Mammary epithelial cell (primary cell): ENCODE measurements at regions of chr12 and their contacts with region 1.

Region 1: GRCh38 chr12:4133636-4134447 is 139.7 kb upstream of the CCND2 start:
- DNase-seq: no peak
- H3K4me3 ChIP-seq: no peak overlapping the region
- H3K27ac ChIP-seq: no peak overlapping the region
- H3K4me1 ChIP-seq: no peaks in the 10 kb centered on the region
- H3K27me3 ChIP-seq: no peaks in the 10 kb centered on the region
- CTCF ChIP-seq: no peak

Region 2: DNA sequence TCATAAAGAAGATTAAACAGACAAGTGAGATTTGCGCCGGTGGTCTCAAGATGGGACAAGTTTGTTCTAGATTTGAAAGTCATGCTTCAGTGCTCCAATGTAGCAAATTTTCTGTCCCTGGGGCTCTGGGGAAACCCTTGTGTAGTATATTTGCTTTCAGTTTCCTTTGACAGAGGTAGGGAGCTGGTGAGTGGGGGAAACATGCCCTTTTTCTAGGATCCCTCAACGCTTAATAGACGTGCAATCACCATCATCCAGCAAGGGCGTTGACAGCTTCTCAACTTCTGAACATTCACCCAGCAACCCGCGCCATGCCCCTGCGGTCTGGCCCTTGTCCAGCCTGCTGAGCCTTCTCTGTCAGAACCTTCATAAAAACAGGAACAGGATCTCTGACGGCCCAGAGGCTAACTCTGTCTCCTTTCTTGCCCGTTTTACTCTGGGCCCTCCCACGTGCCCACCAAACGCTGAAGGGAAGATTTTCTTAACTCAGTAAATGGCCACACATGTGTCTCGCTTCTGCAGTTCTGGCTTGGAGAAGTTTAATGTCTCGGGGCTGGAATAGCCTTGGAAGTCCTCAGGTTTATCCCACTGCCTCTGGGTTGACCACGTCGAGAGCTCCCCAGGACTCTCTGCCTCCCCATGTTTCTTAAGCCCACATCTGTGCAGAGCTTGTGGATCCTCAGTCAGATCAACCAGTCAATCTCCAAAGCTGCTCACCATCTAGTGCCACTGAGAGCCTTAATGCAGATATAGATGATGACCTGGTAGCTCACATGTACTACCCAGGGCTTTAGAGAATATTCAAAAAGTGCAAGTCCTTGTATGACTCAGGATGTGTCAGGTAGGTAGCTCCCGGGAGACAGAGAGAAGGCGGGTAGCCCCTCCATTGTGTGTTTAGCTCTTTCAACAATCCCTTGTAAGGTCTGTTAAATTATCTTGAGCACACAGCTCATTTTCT is 81.7 kb after region 1 on chr12:
- CTCF ChIA-PET with region 1: no interaction called
- dilution Hi-C with region 1: loop called (anchors 5 kb)
- in situ Hi-C with region 1: no loop called
- intact Hi-C with region 1: no loop called
- DNase-seq: peak; percentile 81
- H3K4me3 ChIP-seq: no peak overlapping the region
- H3K27ac ChIP-seq: peak overlapping the region; percentile 29
- H3K4me1 ChIP-seq: peaks cover 24% of the 10 kb centered on the region
- H3K27me3 ChIP-seq: no peaks in the 10 kb centered on the region
- CTCF ChIP-seq: no peak